GM13977 (cell line): ENCODE measurements at regions of chr14 and their contacts with region 1.

Region 1: GRCh38 chr14:36661756-36662498 is at the start of gene PAX9:
- DNase-seq: peak; percentile 90
- CTCF ChIP-seq: no peak

Region 2: DNA sequence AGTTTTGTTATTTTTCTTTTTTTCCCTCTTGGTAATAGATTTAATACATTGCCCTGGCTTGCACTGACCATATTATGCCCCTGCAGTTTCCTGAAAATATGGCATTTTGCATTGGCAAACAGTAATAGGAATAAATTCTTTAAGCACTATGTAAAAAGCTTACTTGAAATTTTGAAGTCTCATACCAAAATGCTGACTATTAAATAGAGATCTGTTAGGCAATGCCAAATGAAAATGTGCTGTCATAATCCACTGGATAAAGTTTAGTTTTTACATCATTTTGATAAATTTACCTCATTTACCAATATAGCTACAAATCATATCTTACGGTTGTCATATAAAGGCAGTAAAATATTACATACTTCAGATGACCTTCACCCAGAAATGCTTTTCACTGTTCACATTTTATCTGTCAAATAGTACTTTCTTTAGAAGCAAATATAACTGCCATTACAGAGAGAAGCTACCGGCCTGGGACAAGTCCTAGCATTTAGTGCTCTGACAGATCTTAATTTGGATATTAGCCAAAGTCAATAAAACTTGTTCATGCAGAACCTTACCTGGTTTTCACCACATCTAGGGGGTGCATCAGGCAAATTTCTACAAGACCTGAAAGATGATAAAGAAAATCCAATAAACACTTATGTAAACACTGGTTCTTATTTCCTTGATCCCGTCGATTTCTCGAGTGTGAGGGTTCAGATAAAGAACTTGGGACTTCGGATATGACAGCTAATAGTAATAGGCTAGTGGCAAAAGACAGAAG is 212.7 kb after region 1 on chr14:
- in situ Hi-C with region 1: no loop called
- DNase-seq: no peak
- CTCF ChIP-seq: no peak

Region 3: DNA sequence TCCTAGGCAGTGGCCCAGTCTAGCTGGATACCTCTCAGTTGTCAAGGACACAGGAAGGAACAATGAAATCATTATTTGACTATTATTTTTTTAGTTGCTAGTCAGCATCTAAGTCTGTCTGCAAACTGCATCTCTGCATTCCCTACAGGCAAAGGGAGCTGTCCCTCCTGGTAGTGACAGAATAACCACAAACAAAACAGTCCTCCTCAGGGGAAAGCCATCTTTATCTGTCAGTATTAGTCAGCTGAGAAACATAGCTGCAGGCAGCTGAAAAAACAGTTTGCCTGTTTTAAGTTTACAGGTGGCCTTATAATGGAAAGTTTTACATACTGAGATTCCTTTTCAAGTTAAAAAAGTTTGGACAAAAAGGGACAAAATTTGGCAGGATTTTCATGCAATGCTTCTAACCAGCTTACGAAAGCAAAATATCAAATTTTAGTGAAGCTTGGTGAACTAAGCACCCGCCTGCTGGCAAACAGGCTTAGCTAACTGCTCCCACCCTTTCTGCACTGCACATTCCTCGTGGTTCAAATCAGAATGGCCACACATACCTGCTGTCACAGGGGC is 481.0 kb after region 1 on chr14:
- in situ Hi-C with region 1: no loop called
- DNase-seq: no peak
- CTCF ChIP-seq: no peak

Region 4: GRCh38 chr14:37594238-37594914 is 932.4 kb after region 1 on chr14:
- in situ Hi-C with region 1: loop called (anchors 25 kb)
- DNase-seq: peak; percentile 71
- CTCF ChIP-seq: peak; percentile 41